Aorta (tissue), 5 donors: ENCODE measurements at regions of chr12 and their contacts with region 1.

Region 1: GRCh38 chr12:29709055-29709454 is 74.7 kb downstream of the TMTC1 start:
- DNase-seq: no peak
- ATAC-seq: no peak
- H3K4me3 ChIP-seq: no peak overlapping the region
- H3K27ac ChIP-seq: no peak overlapping the region
- H3K4me1 ChIP-seq: peaks cover 6 to 7% of the 10 kb centered on the region in 2 donors
- H3K27me3 ChIP-seq: no peaks in the 10 kb centered on the region

Region 2: DNA sequence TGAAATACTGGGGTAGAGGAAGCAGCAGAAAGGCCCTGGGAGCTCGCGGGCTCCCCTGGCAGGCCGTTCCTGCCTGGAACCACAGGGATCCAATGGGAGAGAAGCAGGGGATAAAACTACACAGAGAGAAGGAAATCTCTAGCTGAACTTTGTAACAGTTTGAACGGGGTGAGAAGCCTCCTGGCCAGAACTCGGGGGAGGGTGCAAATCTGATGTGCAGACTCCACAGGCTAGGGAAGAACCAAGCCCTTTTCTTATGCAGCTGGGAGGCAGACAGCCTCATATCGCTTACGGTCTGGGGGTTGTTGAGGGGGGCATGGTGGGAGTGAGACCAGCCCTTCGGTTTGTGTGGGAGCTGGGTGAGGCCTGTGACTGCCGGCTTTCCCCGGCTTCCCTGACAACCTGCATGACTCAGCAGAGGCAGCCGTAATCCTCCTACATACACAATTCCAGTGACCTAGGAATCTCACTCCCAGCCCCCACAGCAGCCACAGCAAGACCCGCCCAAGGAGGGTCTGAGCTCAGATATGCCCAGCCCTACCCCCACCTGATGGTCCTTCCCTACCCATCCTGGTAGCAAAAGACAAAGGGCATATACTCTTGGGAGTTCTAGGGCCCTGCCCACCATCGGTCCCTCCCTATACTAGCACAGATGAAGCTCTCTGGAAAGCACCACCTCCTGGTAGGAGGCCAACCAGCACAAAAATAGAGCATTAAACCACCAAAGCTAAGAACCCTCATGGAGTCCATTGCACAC is 68.3 kb before region 1 on chr12:
- intact Hi-C with region 1: loop called in 1 of 2 experiments (anchors 5 kb)
- DNase-seq: peak in 1 of 2 donors; percentile 64
- ATAC-seq: peak; percentile 36
- H3K4me3 ChIP-seq: no peak overlapping the region
- H3K27ac ChIP-seq: peak overlapping the region in 1 of 2 donors; percentile 25
- H3K4me1 ChIP-seq: no peaks in the 10 kb centered on the region
- H3K27me3 ChIP-seq: no peaks in the 10 kb centered on the region

Region 3: DNA sequence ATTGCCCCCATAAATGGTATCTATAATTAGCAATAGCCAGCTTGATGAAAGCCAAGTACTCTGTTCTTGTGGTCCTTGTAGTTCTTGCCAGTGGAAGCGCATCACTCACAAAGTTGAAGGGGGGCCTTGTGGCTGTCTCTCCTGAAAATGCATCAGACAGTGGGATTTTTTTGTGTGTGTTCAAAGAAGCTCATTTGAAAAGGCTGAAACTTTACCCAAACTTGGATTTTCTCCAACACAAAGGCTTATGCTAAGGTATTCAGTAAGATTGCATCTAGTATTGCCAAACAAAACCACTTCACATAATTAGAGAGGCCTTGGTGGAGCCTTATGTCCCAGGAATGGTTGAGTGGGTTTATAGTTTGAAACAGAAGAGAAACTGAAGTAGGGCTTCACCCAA is 291.3 kb after region 1 on chr12:
- intact Hi-C with region 1: no loop called
- DNase-seq: no peak
- ATAC-seq: no peak
- H3K4me3 ChIP-seq: no peak overlapping the region
- H3K27ac ChIP-seq: no peak overlapping the region
- H3K4me1 ChIP-seq: peaks cover under 1 to 3% of the 10 kb centered on the region in 2 donors
- H3K27me3 ChIP-seq: no peaks in the 10 kb centered on the region